ENCODE measurements at regions of chr3 and their contacts with region 1.

Region 1: DNA sequence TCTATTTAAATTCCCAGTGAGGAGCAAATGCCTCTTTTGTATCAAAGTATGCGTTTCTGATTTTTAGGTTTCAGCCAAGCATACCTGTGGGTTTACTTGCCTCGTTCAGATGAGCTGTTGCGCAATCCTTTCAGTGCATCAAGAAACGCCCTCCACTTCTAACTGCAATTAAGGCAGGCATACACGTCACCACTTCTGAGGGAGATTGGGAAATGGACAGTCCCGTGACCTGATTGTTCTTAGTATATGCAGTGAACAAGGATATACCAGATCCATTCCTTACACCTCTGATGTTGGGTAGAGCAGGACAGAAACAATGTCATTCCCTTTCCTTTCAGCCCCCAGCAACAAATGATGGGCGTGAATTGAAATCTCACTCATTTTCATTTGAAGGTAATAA is 219.0 kb downstream of the ITPR1 start:
- DNase-seq: no peak
- ATAC-seq: peak; percentile 86 to 90
- H3K4me3 ChIP-seq: no peak overlapping the region
- H3K27ac ChIP-seq: peak overlapping the region; percentile 67
- H3K4me1 ChIP-seq: peaks cover 12% of the 10 kb centered on the region
- H3K27me3 ChIP-seq: no peaks in the 10 kb centered on the region
- CTCF ChIP-seq: no peak

Region 2: GRCh38 chr3:4474683-4475490 is 237.3 kb before region 1 on chr3:
- intact Hi-C with region 1: no loop called
- DNase-seq: peak; percentile 55
- ATAC-seq: peak; percentile 90 to 91
- H3K4me3 ChIP-seq: no peak overlapping the region
- H3K27ac ChIP-seq: no peak overlapping the region
- H3K4me1 ChIP-seq: peaks cover 12% of the 10 kb centered on the region
- H3K27me3 ChIP-seq: no peaks in the 10 kb centered on the region
- CTCF ChIP-seq: no peak

Region 3: DNA sequence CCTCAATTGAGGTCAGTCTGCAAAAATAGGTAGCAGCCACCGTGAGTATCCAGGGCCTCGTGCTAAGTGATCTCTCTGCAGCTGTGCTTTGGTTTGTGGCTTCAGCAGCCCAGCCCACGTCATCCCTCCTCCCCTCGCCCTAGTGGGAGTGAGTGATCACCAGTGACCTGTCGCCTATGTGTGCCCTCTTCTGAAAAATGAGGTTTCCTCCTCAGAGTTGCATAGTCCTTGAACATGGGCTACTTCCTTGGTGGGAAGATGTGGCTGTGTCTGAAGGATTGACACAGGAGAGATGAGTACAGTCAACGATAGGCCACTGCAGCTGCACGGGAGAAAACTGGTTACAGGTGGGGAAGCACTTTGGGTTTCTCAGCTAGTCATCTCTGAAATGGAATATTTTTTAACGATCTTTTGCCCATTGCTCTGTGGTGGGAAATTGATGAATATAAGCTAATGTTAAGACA is 122.3 kb after region 1 on chr3:
- intact Hi-C with region 1: no loop called
- DNase-seq: peak; percentile 63
- ATAC-seq: peak; percentile 33 to 46
- H3K4me3 ChIP-seq: no peak overlapping the region
- H3K27ac ChIP-seq: no peak overlapping the region
- H3K4me1 ChIP-seq: peaks cover 46% of the 10 kb centered on the region
- H3K27me3 ChIP-seq: no peaks in the 10 kb centered on the region
- CTCF ChIP-seq: no peak

Region 4: DNA sequence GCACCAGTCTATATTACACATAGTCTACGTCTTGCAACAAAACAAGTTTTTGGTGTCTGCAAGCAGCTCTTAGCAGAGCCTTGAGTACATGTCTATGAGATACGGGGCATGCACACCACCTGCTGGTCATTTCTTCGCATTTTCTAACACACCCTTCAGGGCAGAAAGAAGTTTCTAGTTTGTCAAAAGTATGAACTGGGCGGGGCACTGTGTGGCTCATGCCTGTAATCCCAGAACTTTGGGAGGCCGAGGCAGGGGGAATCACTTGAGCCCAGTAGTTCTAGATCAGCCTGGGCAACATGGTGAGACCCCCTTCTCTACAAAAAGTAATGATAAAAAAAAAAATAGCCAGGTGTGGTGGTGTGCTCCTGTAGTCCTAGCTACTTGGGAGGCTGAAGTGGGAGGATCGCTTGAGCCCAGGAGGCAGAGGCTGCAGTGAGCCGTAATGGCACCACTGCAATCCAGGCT is 345.7 kb after region 1 on chr3:
- intact Hi-C with region 1: loop called (anchors 10 kb)
- DNase-seq: peak; percentile 81
- ATAC-seq: peak; percentile 89 to 92
- H3K4me3 ChIP-seq: no peak overlapping the region
- H3K27ac ChIP-seq: no peak overlapping the region
- H3K4me1 ChIP-seq: peaks cover 22% of the 10 kb centered on the region
- H3K27me3 ChIP-seq: no peaks in the 10 kb centered on the region
- CTCF ChIP-seq: peak; percentile 79